CD4-positive, alpha-beta memory T cell (primary cell): ENCODE measurements at regions of chr1 and their contacts with region 1.

Region 1: DNA sequence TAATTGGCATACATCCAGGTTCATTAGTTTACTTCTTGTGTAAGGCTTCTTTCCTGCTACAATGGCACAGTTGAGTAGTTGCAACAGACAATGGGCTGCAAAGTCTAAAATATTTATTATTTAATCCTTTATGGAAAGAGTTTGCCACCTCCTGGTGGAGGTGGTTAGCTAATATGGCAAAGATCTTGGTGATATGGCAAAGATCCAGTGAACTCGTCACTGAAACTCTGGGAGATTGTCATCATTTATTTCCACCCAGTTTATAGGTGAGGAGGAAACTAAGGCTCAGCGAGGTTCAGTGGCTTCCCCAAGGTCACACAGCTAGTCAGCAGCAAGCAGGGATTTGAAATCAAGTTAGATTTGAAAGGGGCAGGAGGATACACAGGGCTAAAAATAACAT is 16.1 kb upstream of the IFFO2 start:
- DNase-seq: peak; percentile 57 to 64 (median 61)
- H3K4me3 ChIP-seq: no peak overlapping the region
- H3K4me3 Mint-ChIP-seq: no peak overlapping the region
- H3K27ac ChIP-seq: no peak overlapping the region
- H3K27ac Mint-ChIP-seq: peak overlapping the region in 1 of 7 donors; percentile 74
- H3K4me1 ChIP-seq: no peaks in the 10 kb centered on the region
- H3K4me1 Mint-ChIP-seq: peaks cover 1 to 8% (median 3%) of the 10 kb centered on the region in 4 donors
- H3K27me3 ChIP-seq: no peaks in the 10 kb centered on the region
- H3K27me3 Mint-ChIP-seq: no peaks in the 10 kb centered on the region

Region 2: DNA sequence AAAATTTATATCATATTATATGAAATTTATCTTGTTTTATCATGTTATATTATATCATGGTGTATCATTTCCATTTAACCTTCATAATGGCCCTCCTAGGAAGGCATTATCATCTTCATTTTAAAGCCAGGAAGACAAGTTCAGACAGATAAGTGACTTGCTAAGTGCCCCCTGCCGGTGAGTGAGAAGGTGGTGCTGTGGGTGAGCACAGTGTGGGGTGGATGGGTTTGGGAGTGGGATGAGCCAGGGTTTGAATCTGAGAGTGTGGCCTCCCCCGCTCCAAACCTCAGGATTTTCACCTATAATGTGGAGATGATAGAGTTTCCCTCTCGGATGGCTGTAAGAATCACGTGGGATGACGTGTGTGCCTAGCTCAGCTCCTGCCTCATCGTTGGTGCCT is 973.6 kb before region 1 on chr1:
- CTCF ChIA-PET with region 1: no interaction called
- POLR2A ChIA-PET with region 1: no interaction called
- intact Hi-C with region 1: no loop called
- DNase-seq: no peak
- H3K4me3 ChIP-seq: no peak overlapping the region
- H3K4me3 Mint-ChIP-seq: no peak overlapping the region
- H3K27ac ChIP-seq: no peak overlapping the region
- H3K27ac Mint-ChIP-seq: no peak overlapping the region
- H3K4me1 ChIP-seq: no peaks in the 10 kb centered on the region
- H3K4me1 Mint-ChIP-seq: peaks cover 0 to 2% (median 0%) of the 10 kb centered on the region in 4 donors
- H3K27me3 ChIP-seq: no peaks in the 10 kb centered on the region
- H3K27me3 Mint-ChIP-seq: peaks cover 0 to 8% of the 10 kb centered on the region in 2 donors

Region 3: GRCh38 chr1:18913065-18913835 is 59.3 kb before region 1 on chr1:
- CTCF ChIA-PET with region 1: interaction called, 443 read pairs
- POLR2A ChIA-PET with region 1: interaction called, 19 read pairs
- intact Hi-C with region 1: loop called (anchors 1 kb)
- DNase-seq: peak; percentile 64 to 71 (median 66)
- H3K4me3 ChIP-seq: no peak overlapping the region
- H3K4me3 Mint-ChIP-seq: peak overlapping the region in 1 of 8 donors; percentile 41
- H3K27ac ChIP-seq: peak overlapping the region; percentile 5
- H3K27ac Mint-ChIP-seq: peak overlapping the region; percentile 62 to 90 (median 82)
- H3K4me1 ChIP-seq: no peaks in the 10 kb centered on the region
- H3K4me1 Mint-ChIP-seq: peaks cover 5 to 21% (median 8%) of the 10 kb centered on the region in 4 donors
- H3K27me3 ChIP-seq: no peaks in the 10 kb centered on the region
- H3K27me3 Mint-ChIP-seq: no peaks in the 10 kb centered on the region

Region 4: DNA sequence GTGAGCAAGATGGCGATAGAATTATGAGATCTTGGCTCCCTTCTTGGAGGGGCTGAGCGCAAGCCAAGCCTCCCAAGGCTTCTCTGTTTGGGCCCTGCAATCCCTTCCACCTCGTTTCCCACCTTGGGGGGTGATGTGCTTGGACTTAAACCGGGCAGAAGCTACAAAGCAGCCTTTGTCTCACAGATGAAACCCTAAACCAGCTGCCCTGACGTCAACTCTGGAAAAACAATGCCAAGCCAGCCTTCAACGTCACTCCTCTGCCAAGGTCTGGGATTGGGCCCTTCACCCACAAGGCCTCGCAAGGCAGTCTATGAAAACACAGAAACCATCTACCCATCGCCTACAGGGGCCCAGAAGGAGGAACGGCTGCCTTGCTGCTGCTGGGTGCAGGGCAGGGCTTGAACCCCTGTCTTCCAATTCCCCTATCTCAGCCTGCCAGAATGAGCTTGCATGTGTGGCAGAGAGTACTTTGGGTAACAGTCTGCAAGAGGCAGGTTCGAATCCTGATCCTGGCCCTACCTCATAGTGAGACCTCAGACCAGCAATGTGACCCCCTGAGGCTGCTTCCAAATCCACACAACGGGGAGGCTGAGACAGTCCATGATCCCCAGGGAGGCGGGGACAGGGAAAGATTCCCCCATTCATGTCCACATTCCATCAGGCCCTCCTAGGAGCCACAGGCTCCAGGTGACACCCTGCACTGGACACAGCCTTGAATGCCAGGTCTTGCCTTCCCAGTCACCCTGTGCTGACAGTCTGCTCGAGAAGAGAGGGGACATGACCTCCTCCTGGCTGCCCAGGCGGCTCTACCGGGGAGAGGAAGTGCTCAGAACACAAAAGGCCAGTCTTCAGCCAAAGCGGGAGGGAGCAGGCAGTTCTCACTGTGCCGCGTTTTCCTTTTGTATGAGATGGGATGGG is 31.1 kb before region 1 on chr1:
- CTCF ChIA-PET with region 1: interaction called, 12 read pairs
- POLR2A ChIA-PET with region 1: no interaction called
- intact Hi-C with region 1: no loop called
- DNase-seq: no peak
- H3K4me3 ChIP-seq: no peak overlapping the region
- H3K4me3 Mint-ChIP-seq: no peak overlapping the region
- H3K27ac ChIP-seq: peak overlapping the region; percentile 0
- H3K27ac Mint-ChIP-seq: peak overlapping the region; percentile 46 to 94 (median 70)
- H3K4me1 ChIP-seq: peaks cover 96% of the 10 kb centered on the region
- H3K4me1 Mint-ChIP-seq: peaks cover 49 to 93% (median 78%) of the 10 kb centered on the region in 4 donors
- H3K27me3 ChIP-seq: no peaks in the 10 kb centered on the region
- H3K27me3 Mint-ChIP-seq: no peaks in the 10 kb centered on the region

Region 5: GRCh38 chr1:18956369-18957135 is 16.0 kb before region 1 on chr1 and contains the start of gene IFFO2:
- CTCF ChIA-PET with region 1: interaction called, 19 read pairs
- POLR2A ChIA-PET with region 1: interaction called, 5 read pairs
- intact Hi-C with region 1: loop called (anchors 1 kb)
- DNase-seq: peak; percentile 96 to 99 (median 97)
- H3K4me3 ChIP-seq: peak within 1 kb of the TSS in 1 of 2 donors; percentile 74
- H3K4me3 Mint-ChIP-seq: peak within 1 kb of the TSS; percentile 93 to 98 (median 94)
- H3K27ac ChIP-seq: peak within 1 kb of the TSS; percentile 98
- H3K27ac Mint-ChIP-seq: peak within 1 kb of the TSS; percentile 79 to 100 (median 99)
- H3K4me1 ChIP-seq: peaks cover 55% of the 10 kb centered on the region
- H3K4me1 Mint-ChIP-seq: peaks cover 31 to 66% (median 47%) of the 10 kb centered on the region in 4 donors
- H3K27me3 ChIP-seq: no peaks in the 10 kb centered on the region
- H3K27me3 Mint-ChIP-seq: no peaks in the 10 kb centered on the region
- total RNA-seq, gene IFFO2: 39.0 to 41.3 TPM

Region 6: GRCh38 chr1:19096036-19096833 is 123.7 kb after region 1 on chr1:
- CTCF ChIA-PET with region 1: interaction called, 9 read pairs
- POLR2A ChIA-PET with region 1: no interaction called
- intact Hi-C with region 1: loop called (anchors 1 kb)
- DNase-seq: peak in 3 of 5 donors; percentile 9 to 25 (median 15)
- H3K4me3 ChIP-seq: no peak overlapping the region
- H3K4me3 Mint-ChIP-seq: no peak overlapping the region
- H3K27ac ChIP-seq: no peak overlapping the region
- H3K27ac Mint-ChIP-seq: peak overlapping the region in 2 of 7 donors; percentile 7 to 69
- H3K4me1 ChIP-seq: no peaks in the 10 kb centered on the region
- H3K4me1 Mint-ChIP-seq: no peaks in the 10 kb centered on the region
- H3K27me3 ChIP-seq: no peaks in the 10 kb centered on the region
- H3K27me3 Mint-ChIP-seq: no peaks in the 10 kb centered on the region